ENCODE measurements at regions of chr14 and their contacts with region 1.

Region 1: GRCh38 chr14:95561001-95561412 is 26.2 kb downstream of the GLRX5 start:
- DNase-seq: peak; percentile 90
- H3K4me3 ChIP-seq: no peak overlapping the region
- H3K27ac ChIP-seq: no peak overlapping the region
- H3K4me1 ChIP-seq: no peaks in the 10 kb centered on the region
- H3K27me3 ChIP-seq: no peaks in the 10 kb centered on the region
- CTCF ChIP-seq: peak; percentile 89 to 99 (median 98)
- POLR2A ChIP-seq: no peak

Region 2: DNA sequence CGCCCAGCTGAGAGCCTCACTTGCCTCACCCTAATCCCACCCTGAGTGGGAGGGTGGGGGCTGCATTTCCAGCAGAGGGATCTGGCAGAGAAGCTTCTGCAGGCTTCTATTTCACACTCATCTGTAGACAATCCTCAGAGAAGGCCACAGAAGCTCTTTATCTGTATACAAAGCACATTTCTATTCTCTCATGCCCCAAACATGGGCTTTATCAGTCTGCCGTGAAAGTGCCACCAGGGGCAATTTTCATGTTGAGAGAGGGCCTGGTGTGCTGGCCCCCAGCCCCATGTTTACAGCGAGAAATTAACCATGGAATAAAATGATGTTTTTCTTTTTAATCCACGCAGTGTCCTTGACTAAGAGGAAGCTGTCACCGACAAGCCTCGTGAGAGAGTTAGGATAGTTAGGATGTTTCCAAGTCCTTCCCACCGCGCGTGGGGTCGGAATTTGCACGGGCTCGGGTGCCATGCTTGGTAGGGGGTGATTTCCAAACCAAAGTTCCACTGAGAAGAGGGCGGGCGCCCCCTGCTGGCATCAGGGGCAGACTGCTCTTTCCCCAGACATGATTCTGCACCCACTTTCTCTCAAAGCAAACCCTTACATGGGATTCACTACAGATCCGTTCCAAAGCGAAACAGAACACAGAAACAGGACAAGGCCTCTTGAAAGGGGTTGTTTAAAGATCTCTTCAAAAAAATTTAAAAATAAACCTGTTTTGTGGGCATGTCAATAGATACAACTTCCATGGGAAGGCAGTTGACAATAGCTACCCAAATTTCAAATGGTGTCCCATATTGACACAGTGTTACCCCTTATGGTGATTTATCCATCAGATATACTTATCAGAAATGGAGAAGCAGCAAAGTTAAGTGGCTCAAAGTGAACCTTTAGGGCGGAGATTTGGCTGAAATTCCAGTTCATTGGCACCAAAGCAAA is 714.4 kb after region 1 on chr14:
- intact Hi-C with region 1: loop called (anchors 10 kb)
- DNase-seq: peak; percentile 53
- H3K4me3 ChIP-seq: no peak overlapping the region
- H3K27ac ChIP-seq: no peak overlapping the region
- H3K4me1 ChIP-seq: no peaks in the 10 kb centered on the region
- H3K27me3 ChIP-seq: no peaks in the 10 kb centered on the region
- CTCF ChIP-seq: peak; percentile 80 to 92 (median 90)
- POLR2A ChIP-seq: no peak